ENCODE measurements at regions of chr2 and their contacts with region 1.

Region 1: GRCh38 chr2:11129598-11130449 is 25.4 kb upstream of the SLC66A3 start:
- DNase-seq: no peak
- H3K4me3 ChIP-seq: peak overlapping the region; percentile 33
- CTCF ChIP-seq: peak; percentile 28

Region 2: GRCh38 chr2:10821296-10821695 is 308.5 kb before region 1 on chr2:
- in situ Hi-C with region 1: loop called (anchors 5 kb)
- DNase-seq: no peak
- H3K4me3 ChIP-seq: no peak overlapping the region
- CTCF ChIP-seq: no peak

Region 3: GRCh38 chr2:11208083-11208482 is 78.3 kb after region 1 on chr2:
- in situ Hi-C with region 1: loop called (anchors 5 kb)
- DNase-seq: no peak
- H3K4me3 ChIP-seq: no peak overlapping the region
- CTCF ChIP-seq: no peak